Mammary epithelial cell (primary cell): ENCODE measurements at regions of chr22 and their contacts with region 1.

Region 1: DNA sequence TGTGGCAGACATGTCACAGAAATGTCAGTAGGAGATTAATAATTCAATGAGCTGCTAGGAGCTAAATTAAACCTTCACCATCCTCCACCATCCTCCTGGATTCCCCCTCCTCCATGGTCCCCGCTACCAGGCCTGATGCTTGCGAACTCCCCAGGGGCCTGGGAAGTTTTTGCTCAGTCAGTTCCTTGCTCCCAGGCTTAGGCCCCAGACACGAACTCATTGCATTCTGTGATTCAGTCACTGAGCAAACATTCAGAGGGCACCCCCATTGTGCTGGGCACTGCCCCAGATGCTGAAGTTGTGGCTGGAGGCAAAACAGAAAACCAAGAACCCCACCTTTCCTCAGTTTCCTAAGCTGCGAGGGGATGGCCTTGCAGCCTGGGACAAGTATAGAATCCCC is 14.3 kb downstream of the NPTXR start:
- DNase-seq: no peak
- H3K4me3 ChIP-seq: no peak overlapping the region
- H3K27ac ChIP-seq: no peak overlapping the region
- H3K4me1 ChIP-seq: peaks cover 10% of the 10 kb centered on the region
- H3K27me3 ChIP-seq: no peaks in the 10 kb centered on the region
- CTCF ChIP-seq: no peak

Region 2: DNA sequence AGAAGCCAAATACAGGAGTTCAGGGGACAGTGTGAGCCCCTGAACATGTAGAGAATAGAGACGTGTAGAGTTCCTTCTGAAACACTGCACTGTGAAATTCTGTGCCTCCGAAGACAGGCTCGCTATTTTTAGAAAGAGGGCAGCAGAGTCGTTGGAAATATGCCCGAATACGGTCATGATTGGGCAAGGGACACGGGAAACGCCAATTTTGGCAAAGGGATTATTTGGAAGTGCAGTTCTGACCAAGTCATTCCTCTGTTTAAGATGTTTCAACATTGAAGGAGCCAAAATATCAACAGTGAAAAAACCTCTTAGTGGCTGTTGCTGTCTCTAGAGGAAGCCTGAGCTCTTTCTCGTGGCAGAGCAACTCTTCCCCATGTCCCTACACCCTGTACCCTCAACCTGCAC is 52.0 kb after region 1 on chr22:
- CTCF ChIA-PET with region 1: no interaction called
- dilution Hi-C with region 1: loop called (anchors 5 kb)
- in situ Hi-C with region 1: no loop called
- intact Hi-C with region 1: no loop called
- DNase-seq: no peak
- H3K4me3 ChIP-seq: no peak overlapping the region
- H3K27ac ChIP-seq: no peak overlapping the region
- H3K4me1 ChIP-seq: peaks cover 4% of the 10 kb centered on the region
- H3K27me3 ChIP-seq: peaks cover 2% of the 10 kb centered on the region
- CTCF ChIP-seq: peak in 1 of 2 donors; percentile 19

Region 3: GRCh38 chr22:38907767-38908166 is 78.3 kb after region 1 on chr22:
- CTCF ChIA-PET with region 1: no interaction called
- dilution Hi-C with region 1: no loop called
- in situ Hi-C with region 1: no loop called
- intact Hi-C with region 1: no loop called
- DNase-seq: no peak
- H3K4me3 ChIP-seq: no peak overlapping the region
- H3K27ac ChIP-seq: no peak overlapping the region
- H3K4me1 ChIP-seq: no peaks in the 10 kb centered on the region
- H3K27me3 ChIP-seq: no peaks in the 10 kb centered on the region
- CTCF ChIP-seq: no peak